B cell (primary cell): ENCODE measurements at regions of chr16 and their contacts with region 1.

Region 1: DNA sequence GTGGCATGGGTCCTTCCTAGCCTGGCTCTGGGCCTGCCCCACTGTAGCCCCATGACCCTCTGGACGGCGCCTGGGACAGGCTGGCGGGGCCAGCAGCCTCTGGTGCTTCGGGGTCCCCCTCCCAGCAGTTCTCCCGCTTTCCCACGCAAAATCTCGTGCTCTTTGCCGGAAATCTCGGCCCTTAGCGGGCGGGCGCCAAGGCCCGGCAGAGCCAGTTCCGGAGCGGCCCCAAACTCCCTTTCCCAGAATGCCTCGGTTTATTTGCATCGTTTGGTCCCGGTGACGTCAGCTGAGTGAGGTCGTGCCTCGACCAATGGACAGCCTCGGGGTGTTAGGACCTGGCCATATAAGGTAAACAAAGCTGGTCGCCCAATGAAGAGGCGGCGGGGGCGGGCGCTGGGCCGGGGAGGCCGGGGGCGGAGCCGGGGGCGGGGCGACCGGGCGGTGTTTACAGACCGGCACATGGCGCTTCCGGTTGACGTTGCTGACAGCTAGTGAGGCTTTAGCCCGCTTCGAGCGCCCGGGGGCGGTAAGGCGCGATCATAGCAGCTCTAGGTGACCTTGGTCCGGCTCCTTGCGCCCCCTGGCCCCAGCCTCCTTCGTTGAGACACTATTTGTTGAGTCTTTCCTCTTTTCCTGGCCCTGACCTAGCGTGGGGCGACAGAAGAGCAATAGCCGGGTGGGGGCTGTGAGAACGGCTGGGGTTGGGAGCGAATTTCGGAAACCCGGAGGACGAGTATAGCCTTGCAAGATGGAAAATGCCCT is 1.5 kb upstream of the UBALD1 start:
- DNase-seq: peak; percentile 99
- ATAC-seq: peak; percentile 84
- H3K4me3 ChIP-seq: peak overlapping the region; percentile 4 to 81 (median 55)
- H3K4me3 Mint-ChIP-seq: peak overlapping the region; percentile 92
- H3K27ac ChIP-seq: peak overlapping the region; percentile 86 to 96
- H3K27ac Mint-ChIP-seq: peak overlapping the region; percentile 92
- H3K4me1 ChIP-seq: peaks cover 28 to 39% of the 10 kb centered on the region in 2 donors
- H3K4me1 Mint-ChIP-seq: peaks cover 29% of the 10 kb centered on the region
- H3K27me3 ChIP-seq: no peaks in the 10 kb centered on the region
- H3K27me3 Mint-ChIP-seq: no peaks in the 10 kb centered on the region
- CTCF ChIP-seq: peak; percentile 64

Region 2: GRCh38 chr16:3717235-3718018 is 898.8 kb before region 1 on chr16 and contains the start of gene TRAP1:
- CTCF ChIA-PET with region 1: no interaction called
- POLR2A ChIA-PET with region 1: no interaction called
- intact Hi-C with region 1: loop called (anchors 5 kb)
- DNase-seq: peak; percentile 93
- ATAC-seq: peak; percentile 97
- H3K4me3 ChIP-seq: peak within 1 kb of the TSS; percentile 58 to 98 (median 90)
- H3K4me3 Mint-ChIP-seq: peak within 1 kb of the TSS; percentile 91
- H3K27ac ChIP-seq: peak within 1 kb of the TSS; percentile 69 to 91
- H3K27ac Mint-ChIP-seq: peak within 1 kb of the TSS; percentile 87
- H3K4me1 ChIP-seq: peaks cover 11 to 14% of the 10 kb centered on the region in 2 donors
- H3K4me1 Mint-ChIP-seq: peaks cover 15% of the 10 kb centered on the region
- H3K27me3 ChIP-seq: no peaks in the 10 kb centered on the region
- H3K27me3 Mint-ChIP-seq: no peaks in the 10 kb centered on the region
- CTCF ChIP-seq: no peak
- total RNA-seq, gene TRAP1: 51.1 and 54.4 TPM in 2 replicates

Region 3: GRCh38 chr16:4416200-4417032 is 199.8 kb before region 1 on chr16 and contains the start of gene CORO7:
- CTCF ChIA-PET with region 1: interaction called, 10 read pairs
- POLR2A ChIA-PET with region 1: no interaction called
- intact Hi-C with region 1: loop called (anchors 2 kb)
- DNase-seq: peak; percentile 99
- ATAC-seq: peak; percentile 90
- H3K4me3 ChIP-seq: peak within 1 kb of the TSS; percentile 62 to 94 (median 78)
- H3K4me3 Mint-ChIP-seq: peak within 1 kb of the TSS; percentile 96
- H3K27ac ChIP-seq: peak within 1 kb of the TSS; percentile 91 to 95
- H3K27ac Mint-ChIP-seq: peak within 1 kb of the TSS; percentile 95
- H3K4me1 ChIP-seq: peaks cover 24 to 35% of the 10 kb centered on the region in 2 donors
- H3K4me1 Mint-ChIP-seq: peaks cover 31% of the 10 kb centered on the region
- H3K27me3 ChIP-seq: no peaks in the 10 kb centered on the region
- H3K27me3 Mint-ChIP-seq: no peaks in the 10 kb centered on the region
- CTCF ChIP-seq: no peak
- total RNA-seq, gene CORO7: 114 and 117 TPM in 2 replicates

Region 4: GRCh38 chr16:4475880-4476788 is 140.1 kb before region 1 on chr16 and contains the start of gene HMOX2:
- CTCF ChIA-PET with region 1: interaction called, 3 read pairs
- POLR2A ChIA-PET with region 1: interaction called, 5 read pairs
- intact Hi-C with region 1: loop called (anchors 1 kb)
- DNase-seq: peak; percentile 96
- ATAC-seq: peak; percentile 93
- H3K4me3 ChIP-seq: peak within 1 kb of the TSS; percentile 57 to 96 (median 86)
- H3K4me3 Mint-ChIP-seq: peak within 1 kb of the TSS; percentile 84
- H3K27ac ChIP-seq: peak within 1 kb of the TSS; percentile 28 to 78
- H3K27ac Mint-ChIP-seq: peak within 1 kb of the TSS; percentile 92
- H3K4me1 ChIP-seq: peaks cover 19 to 37% of the 10 kb centered on the region in 2 donors
- H3K4me1 Mint-ChIP-seq: peaks cover 34% of the 10 kb centered on the region
- H3K27me3 ChIP-seq: no peaks in the 10 kb centered on the region
- H3K27me3 Mint-ChIP-seq: no peaks in the 10 kb centered on the region
- CTCF ChIP-seq: peak; percentile 56
- total RNA-seq, gene HMOX2: 36.5 TPM in 2 replicates

Region 5: DNA sequence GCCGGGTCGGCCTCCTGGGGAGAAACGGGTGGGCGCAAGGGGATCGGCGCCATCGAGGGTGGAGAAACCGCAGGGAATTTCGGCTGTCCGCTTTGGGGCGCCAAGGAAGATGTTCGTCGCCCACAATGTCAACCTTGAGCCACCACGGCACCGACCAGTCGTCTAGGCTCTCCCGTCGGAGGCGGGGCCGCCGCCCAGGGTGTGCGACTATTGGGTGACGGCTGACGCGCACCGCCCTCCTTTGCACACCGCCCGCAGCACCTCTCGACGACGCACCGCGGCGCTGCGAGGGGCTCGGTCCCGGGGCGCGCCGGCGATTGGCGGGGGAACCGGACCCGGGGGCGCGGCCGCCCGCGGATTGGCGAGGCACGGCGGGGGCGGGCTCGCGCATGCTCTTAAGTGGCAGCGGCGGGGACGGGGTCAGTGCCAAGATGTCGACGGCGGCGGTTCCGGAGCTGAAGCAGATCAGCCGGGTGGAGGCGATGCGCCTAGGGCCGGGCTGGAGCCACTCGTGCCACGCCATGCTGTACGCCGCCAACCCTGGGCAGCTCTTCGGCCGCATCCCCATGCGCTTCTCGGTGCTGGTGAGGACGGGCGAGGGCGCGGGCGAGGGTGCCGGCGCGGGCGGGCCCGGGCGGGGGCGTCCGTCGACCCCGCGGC is 77.2 kb after region 1 on chr16 and contains the start of gene NUDT16L1:
- CTCF ChIA-PET with region 1: no interaction called
- POLR2A ChIA-PET with region 1: interaction called, 3 read pairs
- intact Hi-C with region 1: loop called (anchors 1 kb)
- DNase-seq: peak; percentile 97
- ATAC-seq: peak; percentile 95
- H3K4me3 ChIP-seq: peak within 1 kb of the TSS; percentile 50 to 85 (median 81)
- H3K4me3 Mint-ChIP-seq: peak within 1 kb of the TSS; percentile 91
- H3K27ac ChIP-seq: peak within 1 kb of the TSS; percentile 34 to 87
- H3K27ac Mint-ChIP-seq: peak within 1 kb of the TSS; percentile 90
- H3K4me1 ChIP-seq: peaks cover 15 to 19% of the 10 kb centered on the region in 2 donors
- H3K4me1 Mint-ChIP-seq: peaks cover 22% of the 10 kb centered on the region
- H3K27me3 ChIP-seq: no peaks in the 10 kb centered on the region
- H3K27me3 Mint-ChIP-seq: no peaks in the 10 kb centered on the region
- CTCF ChIP-seq: no peak
- total RNA-seq, gene NUDT16L1: 38.5 and 43.2 TPM in 2 replicates

Region 6: DNA sequence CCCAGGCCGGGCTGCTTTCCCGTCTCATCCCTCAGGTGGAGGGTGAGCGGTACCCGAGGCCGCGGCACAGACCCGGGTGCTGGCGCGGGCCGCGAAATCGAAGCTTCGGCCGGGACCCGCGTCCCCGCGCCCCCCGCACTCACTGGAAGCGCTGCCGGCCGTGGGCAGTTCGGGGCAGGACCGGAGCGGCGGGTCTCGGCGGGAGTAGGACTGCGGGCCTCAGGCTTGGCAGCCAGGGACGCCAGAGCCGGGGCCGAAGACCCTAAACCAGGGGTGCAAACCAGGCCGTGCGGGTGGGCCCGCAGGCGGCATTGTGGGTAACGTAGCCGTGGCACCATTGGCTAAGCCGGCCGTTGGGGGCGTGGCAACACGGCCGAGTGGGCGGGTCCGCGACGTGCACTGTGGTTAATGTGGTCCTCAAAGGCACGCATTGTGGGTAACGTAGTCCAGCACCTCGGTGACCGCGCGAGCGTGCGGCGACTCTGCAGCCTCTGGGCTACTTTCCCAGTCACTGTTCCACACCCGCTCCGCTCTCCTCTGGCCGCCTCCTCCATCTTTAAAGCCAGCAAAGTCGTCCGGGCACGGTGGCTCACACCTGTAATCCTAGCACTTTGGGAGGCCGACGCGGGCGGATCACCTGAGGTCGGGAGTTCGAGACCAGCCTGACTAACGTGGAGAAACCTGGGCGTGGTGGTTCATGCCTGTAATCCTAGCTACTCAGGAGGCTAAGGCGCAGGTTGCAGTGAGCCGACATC is 150.8 kb after region 1 on chr16 and contains the start of gene ZNF500:
- CTCF ChIA-PET with region 1: no interaction called
- POLR2A ChIA-PET with region 1: no interaction called
- intact Hi-C with region 1: loop called (anchors 1 kb)
- DNase-seq: peak; percentile 95
- ATAC-seq: peak; percentile 91
- H3K4me3 ChIP-seq: peak within 1 kb of the TSS; percentile 69 to 94 (median 87)
- H3K4me3 Mint-ChIP-seq: peak within 1 kb of the TSS; percentile 98
- H3K27ac ChIP-seq: peak within 1 kb of the TSS in 1 of 2 donors; percentile 80
- H3K27ac Mint-ChIP-seq: peak within 1 kb of the TSS; percentile 95
- H3K4me1 ChIP-seq: peaks cover 15 to 33% of the 10 kb centered on the region in 2 donors
- H3K4me1 Mint-ChIP-seq: peaks cover 31% of the 10 kb centered on the region
- H3K27me3 ChIP-seq: no peaks in the 10 kb centered on the region
- H3K27me3 Mint-ChIP-seq: no peaks in the 10 kb centered on the region
- CTCF ChIP-seq: no peak
- total RNA-seq, gene ZNF500: 26.5 and 35.7 TPM in 2 replicates

Region 7: DNA sequence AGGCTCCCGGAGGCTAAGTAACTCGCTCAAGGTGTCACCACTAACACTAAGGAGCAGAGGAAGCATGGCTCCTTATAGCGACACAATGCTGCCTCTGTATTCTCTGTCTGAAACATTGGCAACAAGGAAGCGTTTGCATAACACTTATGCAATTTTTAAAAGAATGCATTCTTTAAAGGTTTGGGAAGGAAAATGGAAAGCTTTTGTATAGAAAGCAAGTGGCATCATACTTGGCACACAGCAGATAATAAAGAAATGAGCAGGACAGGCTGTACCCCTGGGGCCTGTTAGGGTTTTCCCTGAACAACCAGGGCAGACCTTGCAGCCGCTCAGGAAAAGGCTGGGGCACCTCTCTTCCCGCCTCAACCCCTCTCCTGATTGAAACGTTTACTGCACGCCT is 283.8 kb after region 1 on chr16:
- CTCF ChIA-PET with region 1: no interaction called
- POLR2A ChIA-PET with region 1: no interaction called
- intact Hi-C with region 1: no loop called
- DNase-seq: no peak
- ATAC-seq: no peak
- H3K4me3 ChIP-seq: no peak overlapping the region
- H3K4me3 Mint-ChIP-seq: no peak overlapping the region
- H3K27ac ChIP-seq: no peak overlapping the region
- H3K27ac Mint-ChIP-seq: no peak overlapping the region
- H3K4me1 ChIP-seq: no peaks in the 10 kb centered on the region
- H3K4me1 Mint-ChIP-seq: no peaks in the 10 kb centered on the region
- H3K27me3 ChIP-seq: peaks cover 0 to 3% (median 0%) of the 10 kb centered on the region in 4 experiments
- H3K27me3 Mint-ChIP-seq: peaks cover 30% of the 10 kb centered on the region
- CTCF ChIP-seq: no peak